Sigmoid colon (tissue), 7 donors: ENCODE measurements at regions of chr2 and their contacts with region 1.

Region 1: GRCh38 chr2:236512902-236513435 is 56.7 kb upstream of the ACKR3 start:
- DNase-seq: peak; percentile 73
- H3K4me3 ChIP-seq: no peak overlapping the region
- H3K27ac ChIP-seq: peak overlapping the region in 2 of 4 donors; percentile 8 to 16
- H3K4me1 ChIP-seq: peaks cover 0 to 22% (median 9%) of the 10 kb centered on the region in 4 donors
- H3K27me3 ChIP-seq: no peaks in the 10 kb centered on the region
- CTCF ChIP-seq: peak; percentile 69 to 87 (median 86)
- EP300 ChIP-seq: no peak
- POLR2A ChIP-seq: no peak

Region 2: GRCh38 chr2:236434593-236434992 is 78.4 kb before region 1 on chr2:
- intact Hi-C with region 1: no loop called
- DNase-seq: no peak
- H3K4me3 ChIP-seq: no peak overlapping the region
- H3K27ac ChIP-seq: no peak overlapping the region
- H3K4me1 ChIP-seq: no peaks in the 10 kb centered on the region
- H3K27me3 ChIP-seq: no peaks in the 10 kb centered on the region
- CTCF ChIP-seq: no peak
- EP300 ChIP-seq: no peak
- POLR2A ChIP-seq: no peak

Region 3: GRCh38 chr2:236569573-236569973 is 56.6 kb after region 1 on chr2 and contains the start of gene ACKR3:
- intact Hi-C with region 1: loop called (anchors 1 kb)
- DNase-seq: peak; percentile 92
- H3K4me3 ChIP-seq: peak within 1 kb of the TSS; percentile 28 to 57 (median 46)
- H3K27ac ChIP-seq: peak within 1 kb of the TSS; percentile 85 to 93 (median 87)
- H3K4me1 ChIP-seq: peaks cover 0 to 76% (median 47%) of the 10 kb centered on the region in 4 donors
- H3K27me3 ChIP-seq: no peaks in the 10 kb centered on the region
- CTCF ChIP-seq: peak in 3 of 4 experiments; percentile 30 to 44 (median 32)
- EP300 ChIP-seq: no peak
- POLR2A ChIP-seq: peak in 1 of 2 donors; percentile 60
- total RNA-seq, gene ACKR3: 17.0 to 39.1 (median 21.6) TPM

Region 4: DNA sequence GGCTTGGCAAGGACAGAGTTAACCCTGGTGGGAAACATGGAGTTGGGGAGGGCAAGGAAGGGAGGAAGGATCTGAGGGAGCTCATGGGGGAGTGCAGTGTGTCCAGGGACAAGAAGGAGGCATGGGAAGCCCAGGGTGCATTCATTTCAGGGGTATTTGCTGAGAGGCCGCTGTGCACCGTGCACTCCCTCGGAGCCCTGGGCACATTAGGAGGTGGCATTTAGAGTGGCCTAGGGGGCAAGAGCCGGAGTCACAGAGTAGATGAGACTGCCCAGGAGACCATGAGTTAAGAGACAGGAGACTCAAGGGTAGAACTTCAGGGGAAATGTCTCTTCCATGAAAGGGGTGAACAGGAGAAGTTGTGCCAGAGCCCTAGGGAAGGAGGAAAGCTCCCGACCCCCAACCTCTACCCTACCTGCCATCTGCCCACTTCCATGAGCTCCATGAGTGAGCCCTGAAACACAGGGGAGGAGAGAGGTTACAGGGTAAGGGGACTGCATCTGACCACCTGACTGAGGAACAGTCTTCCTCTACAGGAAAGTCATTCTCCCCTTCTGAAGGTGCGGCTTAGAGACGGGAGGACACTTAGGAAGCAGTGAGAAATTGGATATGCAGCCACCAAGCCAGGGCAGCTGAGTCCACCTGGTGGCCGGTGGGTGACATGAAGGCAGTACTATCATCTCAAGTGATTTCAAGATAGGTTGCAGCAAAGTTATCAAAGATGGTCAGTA is 514.2 kb after region 1 on chr2:
- intact Hi-C with region 1: loop called (anchors 2 kb)
- DNase-seq: peak; percentile 87
- H3K4me3 ChIP-seq: no peak overlapping the region
- H3K27ac ChIP-seq: no peak overlapping the region
- H3K4me1 ChIP-seq: peaks cover 0 to 7% (median 0%) of the 10 kb centered on the region in 4 donors
- H3K27me3 ChIP-seq: no peaks in the 10 kb centered on the region
- CTCF ChIP-seq: peak; percentile 77 to 84 (median 82)
- EP300 ChIP-seq: no peak
- POLR2A ChIP-seq: no peak

Region 5: GRCh38 chr2:237060534-237061312 is 547.8 kb after region 1 on chr2:
- intact Hi-C with region 1: loop called (anchors 5 kb)
- DNase-seq: no peak
- H3K4me3 ChIP-seq: no peak overlapping the region
- H3K27ac ChIP-seq: no peak overlapping the region
- H3K4me1 ChIP-seq: peaks cover 0 to 7% (median 3%) of the 10 kb centered on the region in 4 donors
- H3K27me3 ChIP-seq: no peaks in the 10 kb centered on the region
- CTCF ChIP-seq: peak; percentile 17 to 69 (median 58)
- EP300 ChIP-seq: no peak
- POLR2A ChIP-seq: no peak